Left ventricle myocardium superior (tissue), 1 donor: ENCODE measurements at regions of chr4 and their contacts with region 1.

Region 1: DNA sequence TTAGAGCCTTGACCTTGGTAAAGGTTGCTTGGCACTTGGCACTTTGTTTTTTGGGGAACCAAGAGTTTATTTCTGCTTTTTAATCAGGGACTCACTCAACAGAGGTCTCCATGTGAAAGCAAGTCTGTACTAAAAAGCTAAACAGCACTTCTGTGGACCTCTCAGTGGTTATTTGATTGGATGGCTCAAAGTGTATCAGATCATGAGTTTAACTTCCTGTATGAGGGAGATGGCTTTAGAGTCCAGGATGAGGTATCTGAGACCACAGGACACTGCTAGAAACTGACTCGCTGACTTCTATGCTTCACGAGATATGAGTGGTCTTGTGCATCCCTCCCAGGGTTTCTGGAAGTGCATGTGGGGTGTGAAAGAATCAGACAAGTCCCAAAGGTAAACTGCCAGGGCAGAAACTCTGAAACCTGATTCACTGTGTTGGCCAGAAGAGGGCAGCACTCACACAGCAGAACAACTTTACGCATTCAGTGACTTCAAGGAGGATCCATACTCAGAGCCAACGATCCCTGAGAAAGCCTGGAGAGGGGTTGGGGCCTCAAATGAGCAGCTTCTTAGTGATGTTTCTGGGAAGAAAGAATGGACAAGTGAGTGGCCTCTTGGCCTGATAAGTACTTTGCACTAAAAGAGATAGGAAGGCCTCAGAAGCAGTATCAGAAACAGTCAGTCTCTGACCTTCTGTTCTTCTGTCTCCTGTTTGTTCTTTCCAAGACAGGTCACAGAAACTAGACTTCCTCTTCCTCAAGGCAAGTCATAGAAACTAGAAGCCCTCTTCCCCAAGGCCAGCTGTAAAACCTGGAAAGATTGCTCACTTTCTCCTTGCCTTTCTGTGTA is 220.3 kb upstream of the CXCL13 start:
- DNase-seq: peak; percentile 39
- ATAC-seq: peak; percentile 76

Region 2: DNA sequence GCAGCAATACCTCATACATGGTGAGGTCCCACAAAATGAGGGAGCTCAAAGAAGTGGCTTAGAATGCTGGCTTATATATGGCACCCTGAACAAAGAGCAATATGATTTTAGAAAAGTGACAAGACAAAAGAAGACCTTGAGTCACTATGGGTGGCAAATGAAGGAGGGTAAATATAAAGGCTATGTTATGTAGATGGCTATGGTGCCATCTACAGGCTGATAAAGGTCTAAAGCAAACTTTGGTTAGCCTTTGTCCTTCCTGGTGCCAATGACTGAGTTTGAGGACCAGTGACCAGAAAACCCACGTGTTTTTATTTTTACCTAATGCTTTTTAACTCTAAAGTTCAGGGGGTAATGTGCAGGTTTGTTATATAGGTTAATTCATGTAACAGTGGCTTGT is 76.5 kb before region 1 on chr4:
- intact Hi-C with region 1: no loop called
- DNase-seq: no peak
- ATAC-seq: peak; percentile 45

Region 3: GRCh38 chr4:77433418-77433733 is 48.0 kb after region 1 on chr4:
- intact Hi-C with region 1: loop called (anchors 2 kb)
- DNase-seq: no peak
- ATAC-seq: peak; percentile 89

Region 4: DNA sequence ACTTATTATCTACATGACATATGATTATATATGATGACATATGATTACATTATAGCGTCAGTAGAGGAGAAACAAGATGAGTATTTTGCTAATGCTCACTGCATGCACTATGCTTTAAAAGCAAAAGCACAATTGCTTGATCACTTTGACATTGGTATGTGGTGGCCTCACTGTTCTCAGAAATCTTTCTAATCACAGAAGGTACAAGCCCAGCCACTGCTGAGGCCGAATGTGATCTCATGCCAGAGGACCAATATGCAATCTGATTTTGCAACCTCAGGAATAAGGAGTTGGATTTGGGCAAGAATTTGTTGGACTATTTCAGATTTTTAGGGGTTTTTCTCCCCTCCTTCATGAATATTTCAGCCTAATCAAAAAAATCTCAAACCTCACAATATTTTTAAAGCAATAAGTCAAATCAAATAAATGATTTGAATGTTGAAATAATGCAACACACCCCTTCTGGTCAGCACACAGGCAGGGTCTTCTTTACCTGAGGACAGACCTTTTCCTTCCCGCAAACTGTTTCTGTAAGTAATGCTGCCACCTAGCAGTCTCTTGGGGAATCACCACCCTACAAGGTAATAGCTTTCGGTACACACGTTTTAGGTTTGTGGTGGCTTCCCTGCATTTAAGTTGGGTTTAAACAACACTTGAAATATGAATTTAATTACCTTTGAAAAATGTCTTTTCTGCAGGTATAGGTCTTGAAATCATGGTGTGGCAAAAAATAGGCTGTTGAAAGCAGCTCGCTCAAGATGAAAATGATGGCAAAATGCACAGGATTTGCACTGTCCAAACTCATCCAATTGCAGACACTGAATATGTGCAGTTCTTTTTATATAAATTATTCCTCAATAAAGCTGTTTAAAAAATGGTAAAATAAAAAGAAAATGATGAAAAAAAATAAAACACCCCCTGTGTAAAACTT is 215.4 kb after region 1 on chr4:
- intact Hi-C with region 1: loop called (anchors 5 kb)
- DNase-seq: no peak
- ATAC-seq: no peak